Natural killer cell (primary cell): ENCODE measurements at regions of chr13 and their contacts with region 1.

Region 1: DNA sequence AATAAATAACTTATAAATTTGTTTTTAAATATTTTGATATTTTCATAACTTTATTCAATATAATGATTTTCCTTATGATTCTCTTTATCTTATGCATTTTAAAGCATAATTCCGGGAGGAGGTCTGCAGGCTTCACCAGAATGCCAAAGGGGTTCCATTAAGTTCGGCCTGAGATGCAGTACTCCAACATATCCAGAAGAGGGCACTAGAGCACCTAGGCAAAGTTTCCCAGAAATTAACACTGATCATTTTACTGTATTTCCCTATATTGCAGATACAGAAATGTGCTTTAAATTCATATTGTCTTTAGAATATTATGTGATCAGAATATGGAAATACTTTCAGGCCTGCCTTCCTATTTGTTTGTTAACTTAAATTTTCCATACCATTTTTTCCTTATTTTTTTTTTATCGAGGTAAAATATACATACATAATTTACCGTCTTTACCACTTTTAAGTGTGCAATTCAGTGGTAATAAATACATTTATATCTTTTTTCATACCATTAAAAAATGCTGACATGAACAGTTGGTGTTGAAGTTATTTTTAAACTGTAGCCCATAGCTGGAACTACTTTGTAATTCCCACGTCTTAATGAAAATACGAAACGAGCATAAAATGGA is 58.9 kb upstream of the TM9SF2 start:
- DNase-seq: peak in 1 of 2 donors; percentile 83
- ATAC-seq: peak; percentile 91 to 98 (median 96)
- H3K4me3 ChIP-seq: no peak overlapping the region
- H3K4me3 Mint-ChIP-seq: no peak overlapping the region
- H3K27ac ChIP-seq: no peak overlapping the region
- H3K27ac Mint-ChIP-seq: no peak overlapping the region
- H3K4me1 ChIP-seq: peaks cover 2% of the 10 kb centered on the region
- H3K4me1 Mint-ChIP-seq: peaks cover 0 to 4% of the 10 kb centered on the region in 2 donors
- H3K27me3 ChIP-seq: no peaks in the 10 kb centered on the region
- H3K27me3 Mint-ChIP-seq: peaks cover 16 to 22% of the 10 kb centered on the region in 2 donors
- CTCF ChIP-seq: peak; percentile 98

Region 2: GRCh38 chr13:99425485-99426341 is 16.7 kb before region 1 on chr13:
- intact Hi-C with region 1: no loop called
- DNase-seq: peak in 1 of 2 donors; percentile 71
- ATAC-seq: peak; percentile 48 to 66 (median 50)
- H3K4me3 ChIP-seq: no peak overlapping the region
- H3K4me3 Mint-ChIP-seq: peak overlapping the region; percentile 65
- H3K27ac ChIP-seq: peak overlapping the region; percentile 86
- H3K27ac Mint-ChIP-seq: peak overlapping the region; percentile 17 to 61
- H3K4me1 ChIP-seq: peaks cover 55% of the 10 kb centered on the region
- H3K4me1 Mint-ChIP-seq: peaks cover 24 to 36% of the 10 kb centered on the region in 2 donors
- H3K27me3 ChIP-seq: no peaks in the 10 kb centered on the region
- H3K27me3 Mint-ChIP-seq: peaks cover 31 to 36% of the 10 kb centered on the region in 2 donors
- CTCF ChIP-seq: no peak

Region 3: GRCh38 chr13:99501184-99501847 is 58.9 kb after region 1 on chr13 and contains the start of gene TM9SF2:
- intact Hi-C with region 1: loop called (anchors 1 kb)
- DNase-seq: peak; percentile 97 to 99
- ATAC-seq: peak; percentile 61 to 78 (median 74)
- H3K4me3 ChIP-seq: peak within 1 kb of the TSS; percentile 88
- H3K4me3 Mint-ChIP-seq: peak within 1 kb of the TSS; percentile 96
- H3K27ac ChIP-seq: peak within 1 kb of the TSS; percentile 89
- H3K27ac Mint-ChIP-seq: peak within 1 kb of the TSS; percentile 94 to 98
- H3K4me1 ChIP-seq: peaks cover 45% of the 10 kb centered on the region
- H3K4me1 Mint-ChIP-seq: peaks cover 81 to 83% of the 10 kb centered on the region in 2 donors
- H3K27me3 ChIP-seq: no peaks in the 10 kb centered on the region
- H3K27me3 Mint-ChIP-seq: no peaks in the 10 kb centered on the region
- CTCF ChIP-seq: no peak
- total RNA-seq, gene TM9SF2: 41.8 to 62.1 (median 51.4) TPM

Region 4: GRCh38 chr13:99606324-99607066 is 164.1 kb after region 1 on chr13:
- intact Hi-C with region 1: loop called (anchors 1 kb)
- DNase-seq: peak; percentile 87 to 94
- ATAC-seq: peak; percentile 93 to 97 (median 95)
- H3K4me3 ChIP-seq: peak within 1 kb of the TSS; percentile 77
- H3K4me3 Mint-ChIP-seq: peak within 1 kb of the TSS; percentile 89
- H3K27ac ChIP-seq: peak within 1 kb of the TSS; percentile 69
- H3K27ac Mint-ChIP-seq: peak within 1 kb of the TSS; percentile 78 to 88
- H3K4me1 ChIP-seq: peaks cover 26% of the 10 kb centered on the region
- H3K4me1 Mint-ChIP-seq: peaks cover 23 to 25% of the 10 kb centered on the region in 2 donors
- H3K27me3 ChIP-seq: no peaks in the 10 kb centered on the region
- H3K27me3 Mint-ChIP-seq: peaks cover 0 to 4% of the 10 kb centered on the region in 2 donors
- CTCF ChIP-seq: no peak

Region 5: GRCh38 chr13:99895223-99895994 is 453.0 kb after region 1 on chr13:
- intact Hi-C with region 1: loop called (anchors 10 kb)
- DNase-seq: peak in 1 of 2 donors; percentile 32
- ATAC-seq: peak in 1 of 3 donors; percentile 30
- H3K4me3 ChIP-seq: peak overlapping the region; percentile 9
- H3K4me3 Mint-ChIP-seq: peak overlapping the region; percentile 86
- H3K27ac ChIP-seq: no peak overlapping the region
- H3K27ac Mint-ChIP-seq: no peak overlapping the region
- H3K4me1 ChIP-seq: peaks cover 12% of the 10 kb centered on the region
- H3K4me1 Mint-ChIP-seq: peaks cover 16 to 19% of the 10 kb centered on the region in 2 donors
- H3K27me3 ChIP-seq: peaks cover 30% of the 10 kb centered on the region
- H3K27me3 Mint-ChIP-seq: peaks cover 51 to 60% of the 10 kb centered on the region in 2 donors
- CTCF ChIP-seq: no peak